Mammary epithelial cell (primary cell): ENCODE measurements at regions of chr1 and their contacts with region 1.

Region 1: DNA sequence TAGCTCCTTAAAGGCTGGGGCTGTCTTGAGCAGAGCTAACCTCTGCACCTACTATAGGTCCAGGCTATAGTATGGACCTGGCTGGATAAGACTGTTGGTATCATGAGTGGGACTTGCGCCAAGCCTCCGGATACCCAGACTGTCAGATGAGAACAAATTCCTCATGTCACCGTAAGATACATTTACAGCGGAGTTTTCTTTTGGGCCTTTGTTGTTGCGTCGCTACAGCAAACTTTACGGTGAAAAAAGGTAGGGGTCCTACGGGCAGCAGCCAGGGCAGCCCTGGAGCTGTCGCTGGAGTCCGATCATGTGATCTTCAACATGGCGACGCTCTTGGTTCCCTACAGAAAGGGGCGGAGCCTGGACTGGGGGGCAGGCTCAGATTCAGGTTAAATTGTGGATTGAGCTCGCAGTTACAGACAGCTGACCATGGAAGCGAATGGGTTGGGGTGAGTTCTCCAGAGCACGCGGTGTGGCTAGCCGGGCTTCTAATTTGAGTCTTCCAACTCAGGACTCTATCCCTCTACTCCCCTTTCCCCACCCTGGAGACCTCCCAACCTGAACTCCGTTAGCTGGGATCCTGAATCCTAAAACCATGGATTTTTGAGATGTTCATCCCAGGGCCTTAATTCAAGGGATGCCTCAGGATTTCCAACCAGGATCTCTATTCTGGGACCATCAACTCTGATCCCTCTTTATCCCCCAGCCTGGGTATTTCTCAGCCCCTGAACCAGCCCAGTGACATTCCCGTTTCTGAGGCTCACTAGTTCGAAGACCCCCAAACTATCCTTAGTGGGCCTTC is at the start of gene UROD:
- DNase-seq: peak; percentile 93
- H3K4me3 ChIP-seq: peak within 1 kb of the TSS; percentile 59 to 86 (median 82)
- H3K27ac ChIP-seq: peak within 1 kb of the TSS; percentile 69
- H3K4me1 ChIP-seq: peaks cover 24% of the 10 kb centered on the region
- H3K27me3 ChIP-seq: no peaks in the 10 kb centered on the region
- CTCF ChIP-seq: no peak
- total RNA-seq, gene UROD: 100 to 108 TPM

Region 2: DNA sequence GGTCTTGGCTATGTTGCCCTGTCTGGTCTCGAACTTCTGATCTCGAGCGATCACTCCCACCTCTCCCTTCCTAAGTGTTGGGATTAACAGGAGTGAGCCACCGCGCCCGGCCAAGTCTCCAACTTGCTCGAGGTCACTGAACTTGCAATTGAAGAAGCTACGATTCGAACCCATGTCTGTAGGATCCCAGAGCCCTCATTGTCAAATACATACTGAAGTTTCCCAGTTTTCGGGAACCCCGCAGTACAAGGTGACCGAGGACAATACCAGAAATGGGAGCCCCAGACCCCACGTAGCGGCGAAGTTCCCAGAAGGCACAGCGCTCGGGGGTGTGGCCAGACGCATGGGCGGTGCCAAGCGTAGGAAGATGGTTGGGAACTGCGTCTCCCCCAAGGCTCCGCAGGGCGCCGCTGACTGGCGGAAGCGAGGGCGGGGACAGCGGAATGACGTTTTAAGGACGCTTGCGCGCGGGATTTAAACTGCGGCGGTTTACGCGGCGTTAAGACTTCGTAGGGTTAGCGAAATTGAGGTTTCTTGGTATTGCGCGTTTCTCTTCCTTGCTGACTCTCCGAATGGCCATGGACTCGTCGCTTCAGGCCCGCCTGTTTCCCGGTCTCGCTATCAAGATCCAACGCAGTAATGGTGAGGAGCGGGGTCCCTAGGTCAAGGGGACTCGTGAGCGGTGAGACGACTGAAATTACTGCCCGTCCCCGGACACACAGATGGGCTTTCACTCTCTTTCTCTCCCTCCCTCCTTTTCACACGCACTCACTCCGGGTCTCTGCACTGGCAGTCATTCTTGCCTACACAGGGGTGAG is 272.5 kb before region 1 on chr1 and contains the start of gene KIF2C:
- CTCF ChIA-PET with region 1: no interaction called
- dilution Hi-C with region 1: no loop called
- in situ Hi-C with region 1: no loop called
- intact Hi-C with region 1: loop called (anchors 1 kb)
- DNase-seq: peak; percentile 95
- H3K4me3 ChIP-seq: peak within 1 kb of the TSS; percentile 63 to 88 (median 83)
- H3K27ac ChIP-seq: peak within 1 kb of the TSS; percentile 64
- H3K4me1 ChIP-seq: peaks cover 12% of the 10 kb centered on the region
- H3K27me3 ChIP-seq: no peaks in the 10 kb centered on the region
- CTCF ChIP-seq: no peak
- total RNA-seq, gene KIF2C: 1.0 to 29.8 TPM

Region 3: GRCh38 chr1:44792783-44793714 is 219.0 kb before region 1 on chr1:
- CTCF ChIA-PET with region 1: no interaction called
- dilution Hi-C with region 1: no loop called
- in situ Hi-C with region 1: no loop called
- intact Hi-C with region 1: loop called (anchors 2 kb)
- DNase-seq: no peak
- H3K4me3 ChIP-seq: no peak overlapping the region
- H3K27ac ChIP-seq: peak overlapping the region; percentile 66
- H3K4me1 ChIP-seq: peaks cover 8% of the 10 kb centered on the region
- H3K27me3 ChIP-seq: no peaks in the 10 kb centered on the region
- CTCF ChIP-seq: no peak

Region 4: GRCh38 chr1:44835738-44836675 is 176.0 kb before region 1 on chr1:
- CTCF ChIA-PET with region 1: no interaction called
- dilution Hi-C with region 1: no loop called
- in situ Hi-C with region 1: loop called (anchors 10 kb)
- intact Hi-C with region 1: loop called (anchors 1 kb)
- DNase-seq: peak; percentile 66
- H3K4me3 ChIP-seq: no peak overlapping the region
- H3K27ac ChIP-seq: no peak overlapping the region
- H3K4me1 ChIP-seq: no peaks in the 10 kb centered on the region
- H3K27me3 ChIP-seq: no peaks in the 10 kb centered on the region
- CTCF ChIP-seq: peak; percentile 89 to 91

Region 5: DNA sequence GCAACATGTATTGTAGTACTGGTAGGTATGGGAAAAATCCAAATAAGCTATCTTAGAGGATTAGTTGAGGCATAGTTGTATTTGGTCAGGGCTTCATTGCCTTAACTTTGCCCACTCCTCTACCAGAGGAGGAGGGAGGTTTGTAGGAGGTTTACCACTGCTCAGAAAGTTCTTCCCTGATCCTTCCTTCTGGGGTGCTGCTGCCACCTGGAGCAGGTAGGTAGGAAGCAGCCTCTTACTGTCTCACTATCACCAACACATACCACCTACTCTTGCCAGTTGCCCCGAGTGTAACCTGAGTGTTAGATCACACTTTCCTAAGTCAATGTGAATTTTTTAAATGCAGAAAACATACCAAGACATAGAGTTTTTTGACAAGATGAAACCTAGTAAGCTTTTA is 218.5 kb after region 1 on chr1:
- CTCF ChIA-PET with region 1: no interaction called
- dilution Hi-C with region 1: no loop called
- in situ Hi-C with region 1: no loop called
- intact Hi-C with region 1: loop called (anchors 1 kb)
- DNase-seq: no peak
- H3K4me3 ChIP-seq: no peak overlapping the region
- H3K27ac ChIP-seq: no peak overlapping the region
- H3K4me1 ChIP-seq: no peaks in the 10 kb centered on the region
- H3K27me3 ChIP-seq: no peaks in the 10 kb centered on the region
- CTCF ChIP-seq: peak in 1 of 2 donors; percentile 66

Region 6: GRCh38 chr1:45359882-45360513 is 348.0 kb after region 1 on chr1:
- CTCF ChIA-PET with region 1: interaction called, 6 read pairs
- dilution Hi-C with region 1: no loop called
- in situ Hi-C with region 1: no loop called
- intact Hi-C with region 1: loop called (anchors 1 kb)
- DNase-seq: peak; percentile 47
- H3K4me3 ChIP-seq: no peak overlapping the region
- H3K27ac ChIP-seq: peak overlapping the region; percentile 32
- H3K4me1 ChIP-seq: peaks cover 13% of the 10 kb centered on the region
- H3K27me3 ChIP-seq: no peaks in the 10 kb centered on the region
- CTCF ChIP-seq: peak; percentile 55 to 59

Region 7: GRCh38 chr1:45569962-45570581 is 558.0 kb after region 1 on chr1:
- CTCF ChIA-PET with region 1: no interaction called
- dilution Hi-C with region 1: no loop called
- in situ Hi-C with region 1: no loop called
- intact Hi-C with region 1: loop called (anchors 2 kb)
- DNase-seq: peak; percentile 62
- H3K4me3 ChIP-seq: no peak overlapping the region
- H3K27ac ChIP-seq: no peak overlapping the region
- H3K4me1 ChIP-seq: no peaks in the 10 kb centered on the region
- H3K27me3 ChIP-seq: no peaks in the 10 kb centered on the region
- CTCF ChIP-seq: peak; percentile 99 to 100